Mammary epithelial cell (primary cell): ENCODE measurements at regions of chr12 and their contacts with region 1.

Region 1: GRCh38 chr12:51371295-51371953 is 19.8 kb downstream of the GALNT6 start:
- DNase-seq: peak; percentile 95
- H3K4me3 ChIP-seq: no peak overlapping the region
- H3K27ac ChIP-seq: peak overlapping the region; percentile 73
- H3K4me1 ChIP-seq: peaks cover 25% of the 10 kb centered on the region
- H3K27me3 ChIP-seq: no peaks in the 10 kb centered on the region
- CTCF ChIP-seq: no peak

Region 2: GRCh38 chr12:51419425-51420208 is 48.2 kb after region 1 on chr12:
- CTCF ChIA-PET with region 1: no interaction called
- dilution Hi-C with region 1: no loop called
- in situ Hi-C with region 1: no loop called
- intact Hi-C with region 1: loop called (anchors 2 kb)
- DNase-seq: no peak
- H3K4me3 ChIP-seq: no peak overlapping the region
- H3K27ac ChIP-seq: no peak overlapping the region
- H3K4me1 ChIP-seq: no peaks in the 10 kb centered on the region
- H3K27me3 ChIP-seq: no peaks in the 10 kb centered on the region
- CTCF ChIP-seq: peak in 1 of 2 donors; percentile 37